ENCODE measurements at regions of chr16 and their contacts with region 1.

Region 1: DNA sequence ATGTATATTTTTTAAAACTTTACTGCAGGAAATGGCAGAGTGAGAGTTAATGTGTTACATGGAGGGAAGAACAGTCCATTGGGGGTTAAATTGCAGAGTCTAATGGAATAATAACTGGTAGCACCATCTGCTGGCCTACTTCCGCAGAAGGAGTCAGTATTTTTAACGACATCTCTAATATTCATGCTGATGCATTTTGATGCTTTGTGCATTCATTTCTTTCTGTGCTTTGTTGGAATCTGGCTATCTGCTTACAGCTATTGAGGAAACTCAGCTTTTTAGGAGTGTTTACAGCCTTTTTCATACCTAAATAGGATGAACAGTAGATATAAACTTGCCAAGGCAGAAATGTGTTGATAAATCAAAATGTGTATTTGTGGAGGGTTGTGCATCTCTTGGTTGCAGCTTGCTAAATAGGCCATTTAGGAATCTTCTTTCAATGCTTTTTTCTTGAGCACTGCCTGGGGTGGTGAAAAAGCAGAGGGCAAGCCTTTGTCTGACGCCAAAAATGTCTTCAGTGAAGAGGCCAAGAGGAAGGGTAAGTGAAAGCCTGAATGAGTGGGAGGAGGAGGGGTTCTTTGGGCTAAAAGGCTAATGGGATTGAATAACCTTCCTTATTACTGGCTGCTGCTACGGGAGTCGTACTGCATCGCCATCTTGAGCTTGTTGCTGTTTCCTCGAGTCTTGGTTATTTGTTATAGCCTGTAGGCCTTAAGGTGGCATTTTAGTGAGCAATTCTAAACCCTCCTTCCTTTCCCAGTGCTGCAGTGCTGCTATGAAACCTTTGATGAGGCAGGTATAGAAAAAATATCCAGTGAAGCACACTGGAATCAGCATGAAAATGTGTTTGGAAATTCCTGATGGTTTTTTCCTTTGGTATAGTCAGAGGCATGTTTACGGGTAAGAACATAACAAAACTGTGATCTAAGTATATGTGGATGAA is 153.3 kb downstream of the CHD9 start:
- DNase-seq: peak; percentile 67
- H3K4me3 ChIP-seq: peak overlapping the region; percentile 10
- H3K27ac ChIP-seq: peak overlapping the region; percentile 75
- H3K4me1 ChIP-seq: peaks cover 7% of the 10 kb centered on the region
- H3K27me3 ChIP-seq: no peaks in the 10 kb centered on the region
- CTCF ChIP-seq: peak; percentile 32

Region 2: DNA sequence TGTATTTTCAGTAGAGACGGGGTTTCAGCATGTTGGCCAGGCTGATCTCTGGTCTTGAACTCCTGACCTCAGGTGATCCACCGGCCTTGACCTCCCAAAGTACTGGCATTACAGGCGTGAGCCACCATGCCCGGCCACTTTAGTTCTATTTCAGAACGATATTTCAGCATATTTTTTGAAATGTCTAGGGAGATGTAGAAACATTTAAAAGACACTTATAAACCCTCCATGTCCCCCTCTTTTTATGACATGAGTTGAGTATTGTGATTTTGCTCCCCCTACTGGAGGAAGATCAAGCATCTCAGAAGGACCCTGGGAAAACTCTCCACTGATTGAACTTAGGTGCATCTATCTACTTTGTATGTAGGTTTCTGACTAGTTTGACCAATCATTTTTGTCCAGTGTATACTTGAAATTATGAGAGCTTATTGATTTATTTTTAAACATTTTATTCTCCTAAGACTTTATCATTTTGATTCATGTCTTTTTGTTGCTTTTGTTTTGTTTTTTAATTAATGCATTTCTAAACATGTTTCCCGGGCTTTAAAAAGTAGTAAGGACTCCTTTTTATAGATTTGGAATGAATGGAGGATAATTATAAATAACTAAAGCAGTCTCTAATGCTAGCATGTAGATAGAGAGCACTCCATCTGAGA is 48.2 kb before region 1 on chr16:
- intact Hi-C with region 1: loop called (anchors 10 kb)
- DNase-seq: peak; percentile 35
- H3K4me3 ChIP-seq: no peak overlapping the region
- H3K27ac ChIP-seq: no peak overlapping the region
- H3K4me1 ChIP-seq: no peaks in the 10 kb centered on the region
- H3K27me3 ChIP-seq: no peaks in the 10 kb centered on the region
- CTCF ChIP-seq: peak; percentile 61